Ovary (tissue), 10 donors: ENCODE measurements at regions of chr2 and their contacts with region 1.

Region 1: DNA sequence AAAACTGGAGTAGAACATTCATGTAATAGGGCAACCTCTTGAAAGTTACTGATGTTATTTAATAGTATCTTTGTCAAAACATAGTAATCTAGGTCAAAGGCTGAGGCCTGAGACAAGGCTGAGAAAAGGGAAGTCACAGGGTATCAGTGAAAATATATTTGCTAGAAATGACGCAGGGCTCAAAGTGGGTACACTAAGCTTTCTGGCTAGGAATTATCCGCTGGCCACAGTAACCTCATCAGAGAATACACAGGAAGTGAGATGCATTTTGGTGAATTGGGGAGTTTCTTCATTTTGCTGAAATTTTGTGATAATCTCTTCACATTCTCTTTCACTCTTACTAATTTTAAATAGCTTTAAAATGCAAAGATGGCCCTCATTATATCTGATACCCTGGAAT is 206.8 kb downstream of the OTX1 start:
- DNase-seq: no peak
- H3K4me3 ChIP-seq: no peak overlapping the region
- H3K27ac ChIP-seq: no peak overlapping the region
- H3K4me1 ChIP-seq: no peaks in the 10 kb centered on the region
- H3K27me3 ChIP-seq: no peaks in the 10 kb centered on the region
- CTCF ChIP-seq: no peak
- EP300 ChIP-seq: no peak
- POLR2A ChIP-seq: no peak

Region 2: GRCh38 chr2:63283273-63283672 is 25.8 kb after region 1 on chr2:
- intact Hi-C with region 1: loop called in 1 of 4 experiments (anchors 1 kb)
- DNase-seq: no peak
- H3K4me3 ChIP-seq: no peak overlapping the region
- H3K27ac ChIP-seq: no peak overlapping the region
- H3K4me1 ChIP-seq: no peaks in the 10 kb centered on the region
- H3K27me3 ChIP-seq: no peaks in the 10 kb centered on the region
- CTCF ChIP-seq: no peak
- EP300 ChIP-seq: no peak
- POLR2A ChIP-seq: no peak

Region 3: GRCh38 chr2:63772061-63772460 is 514.6 kb after region 1 on chr2:
- intact Hi-C with region 1: no loop called
- DNase-seq: no peak
- H3K4me3 ChIP-seq: no peak overlapping the region
- H3K27ac ChIP-seq: no peak overlapping the region
- H3K4me1 ChIP-seq: no peaks in the 10 kb centered on the region
- H3K27me3 ChIP-seq: no peaks in the 10 kb centered on the region
- CTCF ChIP-seq: no peak
- EP300 ChIP-seq: no peak
- POLR2A ChIP-seq: no peak